ENCODE measurements at regions of chr6 and their contacts with region 1.

Region 1: GRCh38 chr6:24520929-24521546 is 26.3 kb downstream of the ALDH5A1 start:
- DNase-seq: no peak
- ATAC-seq: peak; percentile 76
- H3K4me3 ChIP-seq: no peak overlapping the region
- H3K27ac ChIP-seq: peak overlapping the region; percentile 15; the same call in 1 of the 2 replicates
- H3K4me1 ChIP-seq: peaks cover 28% of the 10 kb centered on the region
- H3K27me3 ChIP-seq: no peaks in the 10 kb centered on the region
- CTCF ChIP-seq: peak; percentile 76 to 87 (median 78)
- EP300 ChIP-seq: no peak
- POLR2A ChIP-seq: no peak
- RAD21 ChIP-seq: peak; percentile 50

Region 2: GRCh38 chr6:23728346-23729106 is 792.5 kb before region 1 on chr6:
- CTCF ChIA-PET with region 1: no interaction called
- POLR2A ChIA-PET with region 1: no interaction called
- RAD21 ChIA-PET with region 1: no interaction called
- SMC1A ChIA-PET with region 1: no interaction called
- in situ Hi-C with region 1: no loop called
- intact Hi-C with region 1: no loop called
- DNase-seq: no peak
- ATAC-seq: no peak
- H3K4me3 ChIP-seq: no peak overlapping the region
- H3K27ac ChIP-seq: no peak overlapping the region
- H3K4me1 ChIP-seq: no peaks in the 10 kb centered on the region
- H3K27me3 ChIP-seq: no peaks in the 10 kb centered on the region
- CTCF ChIP-seq: no peak
- EP300 ChIP-seq: no peak
- POLR2A ChIP-seq: no peak
- RAD21 ChIP-seq: no peak

Region 3: GRCh38 chr6:24283043-24283985 is 237.7 kb before region 1 on chr6:
- CTCF ChIA-PET with region 1: interaction called, 14 read pairs
- POLR2A ChIA-PET with region 1: no interaction called
- RAD21 ChIA-PET with region 1: interaction called, 9 read pairs
- SMC1A ChIA-PET with region 1: interaction called, 9 read pairs
- in situ Hi-C with region 1: loop called (anchors 10 kb)
- intact Hi-C with region 1: loop called (anchors 2 kb)
- DNase-seq: peak; percentile 59
- ATAC-seq: peak; percentile 95
- H3K4me3 ChIP-seq: no peak overlapping the region
- H3K27ac ChIP-seq: no peak overlapping the region
- H3K4me1 ChIP-seq: peaks cover 5% of the 10 kb centered on the region; the same call in 1 of the 2 replicates
- H3K27me3 ChIP-seq: peaks cover 0 to 2% of the 10 kb centered on the region in 2 experiments; a peak in 1 of 4 replicates
- CTCF ChIP-seq: peak; percentile 44 to 57 (median 52)
- EP300 ChIP-seq: 0 out of 4 replicates have a peak, but pooled peaks of 1 of the 2 experiments have one; percentile 37
- POLR2A ChIP-seq: no peak
- RAD21 ChIP-seq: peak; percentile 76

Region 4: GRCh38 chr6:24494821-24495795 is 25.9 kb before region 1 on chr6 and contains the start of gene ALDH5A1:
- CTCF ChIA-PET with region 1: interaction called, 233 read pairs
- POLR2A ChIA-PET with region 1: interaction called, 15 read pairs
- RAD21 ChIA-PET with region 1: interaction called, 81 read pairs
- SMC1A ChIA-PET with region 1: interaction called, 68 read pairs
- in situ Hi-C with region 1: no loop called
- intact Hi-C with region 1: no loop called
- DNase-seq: no peak
- ATAC-seq: peak; percentile 86
- H3K4me3 ChIP-seq: peak within 1 kb of the TSS; percentile 79
- H3K27ac ChIP-seq: peak within 1 kb of the TSS; percentile 33
- H3K4me1 ChIP-seq: peaks cover 3% of the 10 kb centered on the region; the same call in 1 of the 2 replicates
- H3K27me3 ChIP-seq: no peaks in the 10 kb centered on the region
- CTCF ChIP-seq: peak; percentile 30 to 57 (median 34); a peak in 5 of 6 replicates
- EP300 ChIP-seq: no peak
- POLR2A ChIP-seq: peak; percentile 71
- RAD21 ChIP-seq: peak; percentile 66
- polyA plus RNA-seq, gene ALDH5A1: 2.6 to 6.9 TPM

Region 5: GRCh38 chr6:24646782-24647181 is 125.7 kb after region 1 on chr6:
- CTCF ChIA-PET with region 1: interaction called, 3 read pairs
- POLR2A ChIA-PET with region 1: no interaction called
- RAD21 ChIA-PET with region 1: no interaction called
- SMC1A ChIA-PET with region 1: interaction called, 10 read pairs
- in situ Hi-C with region 1: no loop called
- intact Hi-C with region 1: no loop called
- DNase-seq: no peak
- ATAC-seq: no peak
- H3K4me3 ChIP-seq: peak overlapping the region; percentile 66; the same call in 1 of the 2 replicates
- H3K27ac ChIP-seq: no peak overlapping the region
- H3K4me1 ChIP-seq: peaks cover 6% of the 10 kb centered on the region
- H3K27me3 ChIP-seq: no peaks in the 10 kb centered on the region
- CTCF ChIP-seq: no peak
- EP300 ChIP-seq: no peak
- POLR2A ChIP-seq: no peak
- RAD21 ChIP-seq: no peak

Region 6: GRCh38 chr6:24699521-24700359 is 178.7 kb after region 1 on chr6:
- CTCF ChIA-PET with region 1: interaction called, 12 read pairs
- POLR2A ChIA-PET with region 1: no interaction called
- RAD21 ChIA-PET with region 1: interaction called, 4 read pairs
- SMC1A ChIA-PET with region 1: interaction called, 7 read pairs
- in situ Hi-C with region 1: loop called (anchors 5 kb)
- intact Hi-C with region 1: loop called (anchors 2 kb)
- DNase-seq: no peak
- ATAC-seq: no peak
- H3K4me3 ChIP-seq: no peak overlapping the region
- H3K27ac ChIP-seq: no peak overlapping the region
- H3K4me1 ChIP-seq: no peaks in the 10 kb centered on the region
- H3K27me3 ChIP-seq: no peaks in the 10 kb centered on the region
- CTCF ChIP-seq: no peak
- EP300 ChIP-seq: no peak
- POLR2A ChIP-seq: no peak
- RAD21 ChIP-seq: no peak

Region 7: DNA sequence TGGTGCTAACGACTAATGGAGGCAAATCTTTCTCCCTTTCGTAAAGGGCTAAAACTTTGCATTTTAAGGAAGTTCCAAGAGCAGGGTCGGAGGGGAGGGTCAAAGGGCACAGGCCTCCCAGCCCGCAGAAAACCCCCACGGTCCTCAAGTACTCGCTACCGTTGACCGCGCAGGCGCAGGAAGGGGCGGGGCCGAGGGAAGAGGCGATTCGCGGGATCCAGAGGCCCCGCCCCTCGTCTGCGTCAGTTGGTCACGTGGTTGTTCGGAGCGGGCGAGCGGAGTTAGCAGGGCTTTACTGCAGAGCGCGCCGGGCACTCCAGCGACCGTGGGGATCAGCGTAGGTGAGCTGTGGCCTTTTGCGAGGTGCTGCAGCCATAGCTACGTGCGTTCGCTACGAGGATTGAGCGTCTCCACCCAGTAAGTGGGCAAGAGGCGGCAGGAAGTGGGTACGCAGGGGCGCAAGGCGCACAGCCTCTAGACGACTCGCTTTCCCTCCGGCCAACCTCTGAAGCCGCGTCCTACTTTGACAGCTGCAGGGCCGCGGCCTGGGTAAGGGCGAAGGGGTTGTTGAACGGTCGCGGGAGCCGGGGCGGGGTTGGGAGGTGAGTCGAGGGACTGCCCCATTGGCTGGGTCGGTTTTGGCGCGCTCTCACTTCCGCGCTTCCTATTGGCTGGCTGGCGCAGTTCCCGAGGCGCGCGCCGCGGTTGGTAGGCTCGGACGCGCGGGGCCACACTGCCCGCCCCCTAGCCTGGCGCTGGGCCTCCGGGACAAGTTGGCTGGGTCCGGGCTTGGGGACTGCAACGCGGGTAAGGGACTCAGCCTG is 253.9 kb after region 1 on chr6 and contains the start of gene GMNN:
- CTCF ChIA-PET with region 1: interaction called, 5 read pairs
- POLR2A ChIA-PET with region 1: interaction called, 4 read pairs
- RAD21 ChIA-PET with region 1: interaction called, 14 read pairs
- SMC1A ChIA-PET with region 1: interaction called, 4 read pairs
- in situ Hi-C with region 1: no loop called
- intact Hi-C with region 1: loop called (anchors 5 kb)
- DNase-seq: peak; percentile 78
- ATAC-seq: peak; percentile 94
- H3K4me3 ChIP-seq: peak within 1 kb of the TSS; percentile 79
- H3K27ac ChIP-seq: peak within 1 kb of the TSS; percentile 87
- H3K4me1 ChIP-seq: peaks cover 3% of the 10 kb centered on the region; the same call in 1 of the 2 replicates
- H3K27me3 ChIP-seq: no peaks in the 10 kb centered on the region
- CTCF ChIP-seq: no peak
- EP300 ChIP-seq: no peak
- POLR2A ChIP-seq: peak; percentile 96
- RAD21 ChIP-seq: no peak
- polyA plus RNA-seq, gene GMNN: 146 to 153 TPM

Region 8: DNA sequence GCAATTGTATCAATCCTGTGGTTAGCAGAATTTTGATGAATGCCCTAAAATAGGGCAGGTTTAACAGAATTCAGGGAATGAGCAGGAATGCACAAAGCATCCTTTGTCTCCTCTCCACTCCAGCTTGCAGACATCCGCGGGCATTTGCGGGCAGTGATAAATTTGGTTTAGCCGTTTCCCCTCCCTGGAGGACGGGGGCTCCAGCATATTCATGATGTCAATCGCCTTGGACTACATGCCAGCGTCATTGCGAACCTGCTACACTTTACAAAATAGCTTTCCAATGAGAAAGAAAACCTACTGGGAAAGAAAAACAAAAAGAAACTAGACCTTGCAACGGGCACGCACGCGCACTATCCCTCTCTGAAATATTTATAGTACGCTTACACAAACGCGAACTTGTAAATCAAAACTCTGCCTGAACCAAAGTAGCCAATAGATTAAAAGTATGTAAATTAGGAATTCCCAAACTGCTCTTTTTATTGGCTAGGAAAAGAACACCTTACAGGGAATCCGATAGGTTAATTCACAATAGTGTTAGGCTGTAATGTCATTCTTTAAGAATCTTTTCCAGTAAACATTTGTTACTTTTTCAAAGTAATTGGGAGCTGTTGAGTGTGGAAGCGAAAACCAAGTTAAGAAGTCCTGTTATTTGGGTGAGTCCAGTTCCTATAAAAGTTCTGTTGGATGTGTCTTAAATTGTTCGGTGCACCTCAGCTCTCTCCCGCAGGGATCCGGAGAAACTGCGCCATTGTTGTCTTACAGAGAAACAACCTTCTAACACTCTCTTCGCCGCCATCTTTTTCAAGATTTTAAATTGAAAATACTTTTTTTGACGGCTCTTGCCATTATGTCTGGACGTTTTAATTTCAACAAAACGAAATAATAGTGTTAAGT is 1702.9 kb after region 1 on chr6:
- CTCF ChIA-PET with region 1: no interaction called
- POLR2A ChIA-PET with region 1: no interaction called
- RAD21 ChIA-PET with region 1: no interaction called
- SMC1A ChIA-PET with region 1: no interaction called
- in situ Hi-C with region 1: no loop called
- intact Hi-C with region 1: no loop called
- DNase-seq: peak; percentile 78
- ATAC-seq: peak; percentile 85
- H3K4me3 ChIP-seq: peak overlapping the region; percentile 79
- H3K27ac ChIP-seq: peak overlapping the region; percentile 96
- H3K4me1 ChIP-seq: peaks cover 21% of the 10 kb centered on the region
- H3K27me3 ChIP-seq: no peaks in the 10 kb centered on the region
- CTCF ChIP-seq: no peak
- EP300 ChIP-seq: no peak
- POLR2A ChIP-seq: no peak
- RAD21 ChIP-seq: no peak

Measured in GM12878 (cell line).